Right ventricle myocardium inferior (tissue), 1 donor: ENCODE measurements at regions of chr2 and their contacts with region 1.

Region 1: DNA sequence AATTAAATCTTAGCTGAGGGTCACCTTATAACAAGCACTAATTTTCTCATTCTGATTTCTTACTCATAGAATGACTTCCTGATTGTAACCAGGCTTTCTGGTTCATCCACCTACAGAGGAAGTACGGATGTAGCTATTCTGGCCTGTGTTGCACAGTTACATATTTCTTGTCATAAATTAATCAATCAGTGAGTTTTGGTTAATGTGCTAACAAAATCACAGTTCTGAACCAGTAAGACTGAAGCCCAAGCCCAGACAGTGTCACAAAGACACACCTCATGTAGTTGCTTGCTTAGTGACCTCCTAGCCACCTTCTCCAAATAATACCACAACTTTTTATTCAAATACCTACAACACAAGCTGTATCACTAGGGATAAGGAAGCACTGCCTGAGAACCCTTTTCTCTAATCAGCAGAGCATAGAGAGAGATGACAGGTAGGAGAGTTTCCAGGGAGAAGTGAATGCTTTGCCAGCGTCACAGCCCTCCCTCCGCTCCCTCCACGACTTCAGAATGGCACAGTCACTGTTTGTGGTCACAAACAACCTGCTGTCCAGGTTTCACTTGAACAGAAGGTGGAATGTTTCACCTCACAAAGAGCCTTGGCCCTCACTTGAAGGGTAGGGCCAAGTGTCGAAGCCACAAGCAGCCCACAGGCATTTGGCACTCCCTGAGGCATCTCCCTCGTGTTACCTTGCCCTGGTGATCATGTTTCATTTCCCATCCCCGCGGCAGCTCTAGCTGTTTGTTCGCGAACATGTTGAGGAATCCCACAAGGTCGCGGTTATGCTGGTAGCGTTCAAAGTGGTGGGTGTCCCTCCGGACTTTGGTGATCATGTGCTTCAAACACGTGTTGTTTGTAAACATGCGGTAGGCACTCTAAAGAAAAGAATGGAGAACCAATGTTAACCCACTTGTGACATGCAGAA is 120.8 kb upstream of the STK17B start:
- DNase-seq: no peak
- ATAC-seq: peak; percentile 74

Region 2: GRCh38 chr2:195622956-195623355 is 669.2 kb before region 1 on chr2:
- intact Hi-C with region 1: no loop called
- DNase-seq: no peak
- ATAC-seq: no peak

Region 3: GRCh38 chr2:196076778-196077568 is 215.2 kb before region 1 on chr2:
- intact Hi-C with region 1: loop called (anchors 5 kb)
- DNase-seq: no peak
- ATAC-seq: no peak

Region 4: DNA sequence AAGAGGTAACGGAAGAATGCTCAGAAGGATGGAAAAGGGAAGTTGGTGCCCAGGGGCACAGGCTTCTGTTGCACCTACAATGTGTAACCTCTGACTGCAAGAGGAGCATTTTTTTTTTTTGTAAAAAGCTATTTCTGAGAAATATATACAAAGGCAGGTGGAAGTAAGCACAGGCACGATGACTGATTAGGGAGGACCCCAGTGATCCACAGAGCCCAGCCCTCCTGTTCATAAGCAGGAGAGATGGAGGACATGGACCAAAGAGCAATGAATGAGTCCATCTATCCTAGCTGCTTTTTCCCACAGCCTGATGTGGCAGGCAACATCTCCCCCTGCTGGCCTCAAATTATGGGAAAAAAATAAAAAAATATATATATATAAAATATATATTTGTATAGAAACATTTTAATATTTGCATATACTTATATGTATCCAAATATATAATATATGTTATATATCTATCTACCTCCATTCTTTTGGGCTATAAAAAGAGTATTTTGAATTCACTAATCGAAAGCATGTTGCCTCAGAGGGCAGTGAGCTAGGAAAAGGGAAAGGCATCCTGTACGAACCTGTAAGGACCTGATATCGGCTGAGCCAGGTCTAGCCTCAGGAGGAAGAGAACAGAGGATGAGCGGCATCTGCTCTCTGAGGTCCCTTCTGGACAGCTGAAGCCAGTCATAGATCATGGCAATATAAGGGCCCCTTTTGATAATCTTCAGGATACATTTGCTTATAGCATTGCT is 45.2 kb after region 1 on chr2:
- intact Hi-C with region 1: loop called (anchors 5 kb)
- DNase-seq: no peak
- ATAC-seq: peak; percentile 20

Region 5: GRCh38 chr2:196453613-196454047 is 161.5 kb after region 1 on chr2:
- intact Hi-C with region 1: loop called (anchors 5 kb)
- DNase-seq: no peak
- ATAC-seq: no peak

Region 6: GRCh38 chr2:196592912-196593881 is 301.1 kb after region 1 on chr2:
- intact Hi-C with region 1: loop called (anchors 5 kb)
- DNase-seq: peak; percentile 69
- ATAC-seq: peak; percentile 79

Region 7: DNA sequence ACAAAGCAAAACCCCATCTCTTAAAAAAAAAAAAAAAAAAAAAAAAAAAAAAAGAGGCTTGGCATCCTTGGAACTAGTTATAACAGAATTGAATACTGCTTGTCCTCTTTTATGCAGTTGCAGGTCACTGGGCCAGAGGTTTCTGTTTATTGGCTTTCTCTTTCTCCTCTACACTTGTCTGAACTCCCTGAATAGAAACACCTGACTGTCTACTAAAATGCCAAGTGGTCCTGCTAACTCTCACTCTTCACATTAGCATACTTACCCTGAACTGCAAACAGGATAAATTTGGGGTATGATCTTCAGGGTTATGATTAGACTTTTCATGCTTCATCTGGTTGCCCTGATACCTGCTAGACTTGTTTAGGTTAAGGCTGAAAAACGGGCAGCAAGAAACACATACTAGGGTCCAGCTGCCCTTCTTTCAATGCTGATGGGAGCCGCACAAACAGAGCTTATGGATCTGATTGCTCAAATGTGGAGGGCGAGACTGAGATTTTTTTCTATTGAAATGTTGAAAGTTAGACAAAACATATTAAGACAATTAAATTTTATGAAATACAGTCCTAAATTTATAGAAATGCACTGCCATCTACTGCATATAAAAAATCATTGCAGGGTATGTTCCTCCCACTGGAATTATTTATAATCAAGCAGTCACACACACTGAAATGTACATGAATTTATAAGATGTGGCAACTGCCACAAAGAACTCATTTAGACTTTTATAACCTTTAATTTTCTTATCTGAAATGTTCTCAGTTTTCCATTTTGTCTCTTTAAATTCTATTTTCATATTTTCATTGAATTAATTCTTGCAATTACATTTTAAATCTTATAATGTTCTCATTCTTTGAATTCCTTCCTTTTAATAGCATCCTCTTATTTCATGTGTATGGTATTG is 466.6 kb after region 1 on chr2:
- intact Hi-C with region 1: loop called (anchors 5 kb)
- DNase-seq: no peak
- ATAC-seq: peak; percentile 59